Activated naive CD4-positive, alpha-beta T cell treated with anti-CD3 and anti-CD28 coated beads for 36 hours (primary cell): ENCODE measurements at regions of chr2 and their contacts with region 1.

Region 1: GRCh38 chr2:54522624-54523281 is 66.6 kb downstream of the SPTBN1 start:
- DNase-seq: peak; percentile 73
- H3K4me3 Mint-ChIP-seq: no peak overlapping the region
- H3K27ac Mint-ChIP-seq: no peak overlapping the region
- H3K4me1 Mint-ChIP-seq: peaks cover 15% of the 10 kb centered on the region
- H3K27me3 Mint-ChIP-seq: no peaks in the 10 kb centered on the region

Region 2: DNA sequence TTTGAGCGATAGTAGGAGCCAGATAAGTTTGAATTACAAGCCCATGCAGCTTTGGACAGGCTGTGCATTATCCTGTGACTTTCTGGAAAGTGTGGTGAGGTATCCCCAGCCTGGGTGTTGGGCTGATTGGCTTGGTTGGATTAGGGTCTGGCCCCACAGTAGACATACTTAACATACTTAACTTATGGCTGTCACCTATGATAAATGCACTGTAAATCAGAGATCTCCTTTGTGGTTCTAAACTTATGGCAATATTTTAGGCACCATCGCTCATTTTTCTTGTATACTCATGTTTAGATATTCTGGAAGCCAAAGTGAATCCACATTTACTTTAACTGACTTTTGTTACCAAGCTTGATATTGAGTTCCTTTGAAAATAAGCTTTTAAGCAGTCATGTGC is 11.8 kb before region 1 on chr2:
- CTCF ChIA-PET with region 1: no interaction called
- intact Hi-C with region 1: no loop called
- DNase-seq: no peak
- H3K4me3 Mint-ChIP-seq: no peak overlapping the region
- H3K27ac Mint-ChIP-seq: no peak overlapping the region
- H3K4me1 Mint-ChIP-seq: no peaks in the 10 kb centered on the region
- H3K27me3 Mint-ChIP-seq: no peaks in the 10 kb centered on the region

Region 3: GRCh38 chr2:54558188-54559005 is 35.6 kb after region 1 on chr2:
- CTCF ChIA-PET with region 1: interaction called, 26 read pairs
- intact Hi-C with region 1: loop called (anchors 1 kb)
- DNase-seq: peak; percentile 83
- H3K4me3 Mint-ChIP-seq: peak overlapping the region; percentile 87
- H3K27ac Mint-ChIP-seq: peak overlapping the region; percentile 99
- H3K4me1 Mint-ChIP-seq: peaks cover 43% of the 10 kb centered on the region
- H3K27me3 Mint-ChIP-seq: no peaks in the 10 kb centered on the region

Region 4: GRCh38 chr2:54606393-54606969 is 83.7 kb after region 1 on chr2:
- CTCF ChIA-PET with region 1: interaction called, 4 read pairs
- intact Hi-C with region 1: loop called (anchors 2 kb)
- DNase-seq: peak; percentile 79
- H3K4me3 Mint-ChIP-seq: peak overlapping the region; percentile 53
- H3K27ac Mint-ChIP-seq: peak overlapping the region; percentile 80
- H3K4me1 Mint-ChIP-seq: peaks cover 84% of the 10 kb centered on the region
- H3K27me3 Mint-ChIP-seq: no peaks in the 10 kb centered on the region

Region 5: DNA sequence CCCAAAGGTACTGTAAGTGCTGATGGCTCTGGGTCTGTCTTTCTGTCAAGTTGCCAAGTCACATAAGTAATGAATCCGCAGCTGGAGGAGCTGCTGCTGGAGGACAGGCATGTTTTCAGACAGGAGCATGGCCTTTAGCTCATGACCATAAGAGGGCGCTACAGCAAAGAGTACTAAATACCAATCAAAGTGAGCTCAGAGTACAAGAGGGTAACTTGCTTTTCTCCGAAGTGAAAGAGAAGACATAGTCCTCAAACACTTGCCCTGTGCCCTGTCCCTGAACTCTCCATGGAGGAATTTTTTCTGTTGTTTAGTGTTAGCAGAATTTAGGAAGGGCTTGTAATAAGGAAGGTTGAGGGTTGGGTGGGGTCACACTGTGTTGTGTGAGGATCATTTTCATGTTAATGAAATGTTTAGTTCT is 142.7 kb after region 1 on chr2:
- CTCF ChIA-PET with region 1: interaction called, 48 read pairs
- intact Hi-C with region 1: loop called (anchors 1 kb)
- DNase-seq: peak; percentile 73
- H3K4me3 Mint-ChIP-seq: no peak overlapping the region
- H3K27ac Mint-ChIP-seq: no peak overlapping the region
- H3K4me1 Mint-ChIP-seq: no peaks in the 10 kb centered on the region
- H3K27me3 Mint-ChIP-seq: no peaks in the 10 kb centered on the region

Region 6: GRCh38 chr2:54899576-54900200 is 376.9 kb after region 1 on chr2:
- CTCF ChIA-PET with region 1: interaction called, 3 read pairs
- intact Hi-C with region 1: loop called (anchors 2 kb)
- DNase-seq: no peak
- H3K4me3 Mint-ChIP-seq: no peak overlapping the region
- H3K27ac Mint-ChIP-seq: no peak overlapping the region
- H3K4me1 Mint-ChIP-seq: peaks cover 27% of the 10 kb centered on the region
- H3K27me3 Mint-ChIP-seq: no peaks in the 10 kb centered on the region

Region 7: GRCh38 chr2:55175254-55176025 is 652.7 kb after region 1 on chr2:
- CTCF ChIA-PET with region 1: interaction called, 5 read pairs
- intact Hi-C with region 1: loop called (anchors 1 kb)
- DNase-seq: no peak
- H3K4me3 Mint-ChIP-seq: no peak overlapping the region
- H3K27ac Mint-ChIP-seq: no peak overlapping the region
- H3K4me1 Mint-ChIP-seq: peaks cover 7% of the 10 kb centered on the region
- H3K27me3 Mint-ChIP-seq: no peaks in the 10 kb centered on the region